Posterior vena cava (tissue), 2 donors: ENCODE measurements at regions of chr7 and their contacts with region 1.

Region 1: DNA sequence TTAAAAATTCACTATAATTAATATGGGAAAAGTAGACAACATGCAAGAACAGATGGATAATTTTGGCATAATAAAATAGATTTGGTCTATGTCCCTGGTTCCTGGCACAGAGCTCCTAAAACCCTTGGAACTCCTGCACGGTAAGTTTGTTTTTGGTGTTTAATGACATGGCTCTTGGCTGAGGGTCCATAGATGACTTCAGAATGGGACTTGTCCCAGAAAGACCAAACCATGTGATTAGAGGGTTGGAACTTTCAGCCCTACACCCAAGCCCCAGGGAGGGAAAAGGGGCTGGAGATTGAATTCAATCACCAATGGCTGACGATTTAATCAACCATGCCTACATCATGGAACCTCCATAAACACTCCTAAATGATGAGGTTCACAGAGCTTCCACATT is 12.6 kb upstream of the GSDME start:
- DNase-seq: no peak

Region 2: DNA sequence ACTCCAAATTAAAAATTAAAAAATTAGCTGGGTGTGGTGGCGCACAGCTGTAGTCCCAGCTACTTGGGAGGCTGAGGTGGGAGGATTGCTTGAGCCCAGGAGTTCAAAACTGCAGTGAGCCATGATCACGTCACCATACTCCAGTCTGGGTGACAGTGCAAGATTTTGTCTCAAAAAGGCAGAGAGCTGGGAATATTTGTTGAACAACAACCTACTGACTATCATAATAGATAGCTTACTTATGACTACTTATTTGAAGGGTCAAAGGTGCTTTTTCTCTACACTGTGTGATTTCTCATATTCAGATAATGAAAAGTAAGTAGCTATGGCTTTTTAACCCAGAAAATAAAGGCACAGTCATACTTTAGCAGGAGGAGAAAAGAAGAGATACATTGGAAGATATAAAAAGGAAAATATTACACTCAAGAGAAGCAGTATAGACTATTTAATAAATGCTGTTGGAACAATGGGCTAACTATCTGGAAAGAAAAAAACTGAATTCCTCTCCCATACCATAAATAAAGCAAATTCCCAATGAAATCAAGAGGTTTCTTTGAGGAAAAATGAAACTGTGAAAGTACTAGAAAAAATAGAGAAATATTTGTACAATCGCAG is 19.3 kb before region 1 on chr7:
- intact Hi-C with region 1: loop called in 1 of 2 experiments (anchors 1 kb)
- DNase-seq: no peak

Region 3: GRCh38 chr7:24842449-24843241 is 72.8 kb after region 1 on chr7:
- intact Hi-C with region 1: no loop called
- DNase-seq: no peak